Ovary (tissue), 10 donors: ENCODE measurements at regions of chr7 and their contacts with region 1.

Region 1: DNA sequence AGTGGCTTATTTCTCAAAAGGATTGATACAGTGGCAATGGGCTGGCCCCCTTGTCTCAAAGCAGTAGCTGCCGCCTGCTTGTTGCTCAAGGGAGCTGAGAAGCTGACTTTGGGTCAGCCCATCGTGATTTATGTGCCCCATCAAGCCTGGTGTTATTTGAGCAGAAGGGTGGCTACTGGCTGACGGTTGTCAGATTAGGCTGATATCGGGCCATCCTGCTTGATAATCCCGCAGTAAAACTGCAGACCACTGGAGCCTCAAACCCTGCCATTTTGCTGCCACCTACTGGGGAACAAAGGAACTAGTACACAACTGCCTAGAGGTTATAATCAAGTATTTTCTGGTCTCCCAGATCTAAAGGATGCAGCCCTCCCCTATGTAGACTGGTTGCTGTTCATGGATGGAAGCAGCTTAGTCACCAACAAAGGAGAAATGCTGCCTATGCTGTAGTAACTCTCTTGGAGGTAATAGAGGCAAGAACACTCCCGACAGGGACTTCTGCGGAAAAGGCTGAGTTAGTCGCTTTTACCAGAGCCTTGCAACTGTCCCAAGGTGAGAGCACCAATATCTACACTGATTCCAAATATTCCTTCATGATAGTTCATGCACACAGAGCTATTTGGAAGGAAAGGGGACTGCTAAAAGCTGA is 65.9 kb upstream of the ZNF92 start:
- DNase-seq: peak; percentile 16 to 35 (median 29)
- H3K4me3 ChIP-seq: no peak overlapping the region
- H3K27ac ChIP-seq: no peak overlapping the region
- H3K4me1 ChIP-seq: no peaks in the 10 kb centered on the region
- H3K27me3 ChIP-seq: no peaks in the 10 kb centered on the region
- CTCF ChIP-seq: peak in 2 of 3 donors; percentile 72 to 75
- EP300 ChIP-seq: no peak
- POLR2A ChIP-seq: no peak

Region 2: DNA sequence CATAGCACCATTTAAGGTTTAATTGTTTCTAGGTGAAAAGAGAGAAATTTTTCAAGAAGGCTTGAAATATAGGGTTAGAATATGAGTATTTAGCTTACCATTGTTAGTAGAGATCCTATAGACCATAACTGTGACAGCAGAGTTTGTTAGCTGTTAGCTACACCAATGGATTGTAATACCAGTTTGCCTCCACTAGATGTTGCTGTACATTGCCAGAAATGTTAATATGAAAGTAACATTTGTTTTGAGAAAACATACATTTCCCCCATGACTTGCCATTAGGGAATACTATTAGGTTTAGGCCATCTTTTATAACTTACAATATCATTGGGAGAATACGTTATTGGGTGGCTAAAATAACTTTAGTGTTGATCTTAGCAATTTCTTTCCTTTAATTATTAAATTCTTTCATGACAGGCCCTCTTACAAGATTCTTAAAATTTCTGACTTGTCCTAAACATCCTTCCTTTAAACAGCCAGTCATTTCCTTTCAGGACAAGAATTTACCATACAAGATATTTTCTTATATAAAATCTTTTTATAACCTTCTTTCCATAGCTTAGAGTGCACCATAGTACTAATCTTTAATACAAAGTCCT is 356.4 kb before region 1 on chr7:
- intact Hi-C with region 1: loop called in 3 of 4 experiments (anchors 5 to 10 kb)
- DNase-seq: no peak
- H3K4me3 ChIP-seq: no peak overlapping the region
- H3K27ac ChIP-seq: no peak overlapping the region
- H3K4me1 ChIP-seq: peaks cover 7% of the 10 kb centered on the region
- H3K27me3 ChIP-seq: no peaks in the 10 kb centered on the region
- CTCF ChIP-seq: peak; percentile 53 to 80 (median 70)
- EP300 ChIP-seq: no peak
- POLR2A ChIP-seq: no peak

Region 3: GRCh38 chr7:65404020-65404419 is 96.2 kb after region 1 on chr7:
- intact Hi-C with region 1: no loop called
- DNase-seq: no peak
- H3K4me3 ChIP-seq: no peak overlapping the region
- H3K27ac ChIP-seq: no peak overlapping the region
- H3K4me1 ChIP-seq: no peaks in the 10 kb centered on the region
- H3K27me3 ChIP-seq: no peaks in the 10 kb centered on the region
- CTCF ChIP-seq: no peak
- EP300 ChIP-seq: no peak
- POLR2A ChIP-seq: no peak